GM10248 (cell line): ENCODE measurements at regions of chr15 and their contacts with region 1.

Region 1: GRCh38 chr15:43390723-43391122 is 19.8 kb downstream of the TUBGCP4 start:
- DNase-seq: no peak
- CTCF ChIP-seq: no peak

Region 2: GRCh38 chr15:43093026-43093425 is 297.7 kb before region 1 on chr15:
- CTCF ChIA-PET with region 1: no interaction called
- POLR2A ChIA-PET with region 1: no interaction called
- DNase-seq: peak; percentile 20
- CTCF ChIP-seq: no peak

Region 3: DNA sequence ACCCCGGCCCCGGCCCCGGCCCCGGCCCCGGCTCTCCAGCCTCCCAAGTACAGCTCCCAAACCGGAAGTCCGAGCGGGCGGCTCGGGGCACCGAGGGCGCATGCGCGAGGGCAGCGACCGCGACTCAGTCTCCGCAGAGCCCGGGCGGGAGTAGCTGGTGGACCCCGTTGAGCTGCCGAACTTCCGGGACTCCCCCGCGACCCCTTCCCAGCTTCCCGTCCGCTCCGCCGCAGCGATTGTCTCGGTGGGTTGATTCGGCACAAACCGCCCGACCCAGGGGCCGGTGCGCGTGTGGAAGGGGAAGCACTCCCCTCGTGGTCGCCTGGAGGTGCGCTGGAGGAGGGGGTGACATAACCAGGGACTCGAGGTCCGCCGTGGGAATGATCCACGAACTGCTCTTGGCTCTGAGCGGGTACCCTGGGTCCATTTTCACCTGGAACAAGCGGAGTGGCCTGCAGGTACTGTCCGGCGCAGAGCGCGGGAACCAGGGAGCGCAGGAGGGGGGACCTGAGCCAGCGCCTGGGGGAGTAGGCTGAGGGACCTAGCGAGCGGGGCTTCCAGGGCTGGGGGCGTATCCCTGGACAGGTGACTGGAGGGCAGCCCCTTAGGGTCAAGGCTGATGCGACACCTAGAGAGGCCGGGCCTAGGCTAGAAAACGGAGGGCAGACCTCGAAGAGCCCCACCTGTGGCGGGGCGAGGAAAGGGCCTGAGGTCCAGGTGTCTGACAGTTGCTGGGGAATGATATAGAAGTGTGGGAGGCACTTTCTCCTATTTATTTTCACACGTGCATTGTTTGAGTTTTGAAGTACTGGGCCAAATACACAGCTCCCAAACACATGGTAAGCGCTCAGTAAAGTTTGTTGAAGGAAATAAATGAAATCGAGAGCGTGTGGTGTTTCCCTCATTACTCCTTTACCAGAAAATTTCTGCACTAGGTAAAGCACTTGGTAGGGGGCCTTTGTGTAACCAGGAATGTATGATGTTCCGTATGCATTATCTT is 19.4 kb before region 1 on chr15 and contains the starts of genes TUBGCP4 and ZSCAN29:
- CTCF ChIA-PET with region 1: interaction called, 11 read pairs
- POLR2A ChIA-PET with region 1: no interaction called
- DNase-seq: peak; percentile 96
- CTCF ChIP-seq: peak; percentile 49

Region 4: DNA sequence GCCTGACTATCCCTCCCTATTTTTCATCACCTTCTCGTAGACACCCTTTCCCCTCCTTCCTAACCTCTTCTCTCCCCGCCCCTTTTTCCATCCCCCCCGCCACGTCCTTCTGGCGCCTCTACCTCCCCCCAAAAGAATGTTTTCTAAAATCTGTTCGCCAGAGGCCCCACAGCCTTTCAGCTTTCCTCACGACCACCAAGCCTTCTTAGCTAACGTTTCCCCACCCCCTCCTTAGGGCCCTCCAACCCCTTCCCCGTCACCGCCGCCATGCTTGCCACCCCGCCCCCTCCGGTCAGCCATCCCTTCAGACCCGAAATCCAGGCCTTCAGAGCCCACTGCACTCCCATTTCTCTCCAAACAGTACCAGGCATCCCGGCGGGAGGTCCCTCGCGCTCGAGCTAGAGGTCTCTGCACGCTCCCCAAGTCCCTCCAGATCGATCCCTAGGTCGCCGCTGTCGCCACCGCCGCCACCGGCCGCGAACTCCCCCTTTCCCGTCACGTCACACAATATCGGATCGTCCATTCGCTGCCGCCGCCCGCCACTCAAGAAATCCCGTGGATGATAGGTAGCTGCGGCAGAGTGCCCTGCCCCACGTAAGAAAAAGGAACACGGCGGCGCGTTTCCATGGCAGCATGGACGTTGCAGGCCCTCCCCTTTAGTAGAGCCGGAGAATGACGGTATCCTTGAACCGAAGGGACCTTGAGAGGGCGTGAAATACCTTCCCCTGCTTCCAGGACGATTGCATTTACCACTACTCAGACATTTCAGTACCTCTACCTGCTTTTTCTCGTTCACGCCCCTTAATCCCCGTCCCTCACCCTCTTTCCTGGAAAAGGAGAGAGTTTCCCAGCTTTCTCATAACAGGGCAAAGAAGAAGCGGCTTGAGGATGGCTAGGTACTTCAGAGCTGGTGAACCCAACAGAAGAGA is 102.2 kb after region 1 on chr15 and contains the start of gene TP53BP1:
- CTCF ChIA-PET with region 1: no interaction called
- POLR2A ChIA-PET with region 1: interaction called, 16 read pairs
- DNase-seq: peak; percentile 96
- CTCF ChIP-seq: no peak